Endothelial cell of umbilical vein (primary cell): ENCODE measurements at regions of chr7 and their contacts with region 1.

Region 1: DNA sequence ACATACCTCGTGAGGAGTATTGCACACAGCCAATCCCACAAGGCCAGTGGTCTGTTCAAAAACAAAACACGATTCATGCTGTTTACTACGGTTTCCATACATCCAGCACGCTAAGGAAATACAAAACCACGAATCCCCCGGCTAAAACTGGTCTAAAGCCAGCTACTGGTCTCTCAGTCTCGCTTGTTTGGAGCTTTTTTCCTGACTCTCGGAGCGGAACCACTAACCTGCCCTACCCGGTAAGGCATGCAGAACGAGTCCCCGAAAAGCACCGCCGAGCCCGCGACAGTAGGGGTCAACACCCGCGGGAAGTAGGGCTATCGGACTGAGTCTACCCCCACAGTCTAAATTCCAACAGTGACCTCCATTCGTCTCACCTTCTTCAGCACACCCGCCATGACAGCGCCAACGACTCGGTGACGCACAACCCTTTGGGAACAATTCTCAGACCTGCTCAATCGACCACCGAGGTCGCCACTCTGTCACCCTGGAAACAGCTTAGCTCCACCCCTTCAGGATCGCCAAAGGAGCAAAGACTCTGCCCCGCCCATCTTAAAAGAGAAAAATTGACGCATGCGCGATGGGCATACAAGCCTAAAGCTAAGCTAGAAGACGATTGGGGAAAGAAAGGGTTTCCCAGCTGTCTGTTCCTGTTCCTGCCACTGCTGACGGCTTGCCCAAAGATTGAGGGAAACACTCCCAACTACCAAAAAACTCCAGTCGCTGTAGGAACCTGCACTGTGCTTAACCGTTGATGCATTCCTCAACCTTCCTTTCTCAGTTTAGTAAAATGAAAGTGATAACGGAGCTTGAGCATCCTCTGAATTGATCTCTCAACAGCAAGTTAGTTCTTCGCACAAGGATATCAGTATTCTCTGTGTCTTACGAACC is at the start of gene NDUFA5:
- DNase-seq: peak; percentile 99
- H3K4me3 ChIP-seq: peak within 1 kb of the TSS; percentile 66 to 98 (median 88)
- H3K27ac ChIP-seq: peak within 1 kb of the TSS; percentile 75
- H3K4me1 ChIP-seq: peaks cover 6% of the 10 kb centered on the region
- H3K27me3 ChIP-seq: no peaks in the 10 kb centered on the region
- CTCF ChIP-seq: no peak
- POLR2A ChIP-seq: peak; percentile 76
- total RNA-seq, gene NDUFA5: 57.6 and 62.3 TPM in 2 replicates

Region 2: DNA sequence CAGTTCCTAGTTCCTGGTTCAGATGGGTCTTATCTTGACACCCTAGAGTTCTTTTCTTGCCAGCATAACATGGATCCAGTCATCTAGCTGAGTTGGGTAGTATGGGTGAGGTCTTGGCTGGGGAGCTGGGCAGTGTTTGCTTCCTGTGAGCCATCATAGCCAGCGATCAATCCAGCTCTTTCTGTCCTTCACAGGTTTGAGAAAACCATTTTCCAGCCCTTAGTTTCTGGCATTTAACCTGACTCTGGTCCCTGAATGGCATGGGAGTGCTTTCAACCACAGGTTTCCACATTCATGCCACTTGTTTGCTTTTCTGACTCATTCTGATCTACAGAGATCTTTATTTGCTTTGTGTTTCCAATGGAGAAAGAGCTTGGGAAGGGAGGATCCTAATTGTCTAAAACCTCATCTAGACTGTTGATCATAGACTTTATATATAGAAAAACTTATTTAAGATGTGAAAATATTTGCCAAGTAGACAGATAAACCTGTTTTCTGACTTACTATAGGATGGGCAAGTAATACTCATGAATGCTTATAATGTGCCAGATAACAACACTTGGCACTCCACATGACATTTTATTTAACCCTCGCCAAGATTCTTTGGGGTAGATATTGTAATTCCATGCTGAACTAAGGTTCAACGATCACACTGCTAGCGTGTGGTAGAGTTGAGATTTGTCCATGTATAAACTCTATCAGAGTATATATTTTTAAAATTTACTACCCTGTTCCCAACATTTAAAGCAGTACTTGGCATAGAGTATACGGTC is 366.3 kb before region 1 on chr7:
- CTCF ChIA-PET with region 1: no interaction called
- POLR2A ChIA-PET with region 1: no interaction called
- dilution Hi-C with region 1: no loop called
- intact Hi-C with region 1: no loop called
- DNase-seq: no peak
- H3K4me3 ChIP-seq: no peak overlapping the region
- H3K27ac ChIP-seq: no peak overlapping the region
- H3K4me1 ChIP-seq: no peaks in the 10 kb centered on the region
- H3K27me3 ChIP-seq: no peaks in the 10 kb centered on the region
- CTCF ChIP-seq: no peak
- POLR2A ChIP-seq: no peak

Region 3: DNA sequence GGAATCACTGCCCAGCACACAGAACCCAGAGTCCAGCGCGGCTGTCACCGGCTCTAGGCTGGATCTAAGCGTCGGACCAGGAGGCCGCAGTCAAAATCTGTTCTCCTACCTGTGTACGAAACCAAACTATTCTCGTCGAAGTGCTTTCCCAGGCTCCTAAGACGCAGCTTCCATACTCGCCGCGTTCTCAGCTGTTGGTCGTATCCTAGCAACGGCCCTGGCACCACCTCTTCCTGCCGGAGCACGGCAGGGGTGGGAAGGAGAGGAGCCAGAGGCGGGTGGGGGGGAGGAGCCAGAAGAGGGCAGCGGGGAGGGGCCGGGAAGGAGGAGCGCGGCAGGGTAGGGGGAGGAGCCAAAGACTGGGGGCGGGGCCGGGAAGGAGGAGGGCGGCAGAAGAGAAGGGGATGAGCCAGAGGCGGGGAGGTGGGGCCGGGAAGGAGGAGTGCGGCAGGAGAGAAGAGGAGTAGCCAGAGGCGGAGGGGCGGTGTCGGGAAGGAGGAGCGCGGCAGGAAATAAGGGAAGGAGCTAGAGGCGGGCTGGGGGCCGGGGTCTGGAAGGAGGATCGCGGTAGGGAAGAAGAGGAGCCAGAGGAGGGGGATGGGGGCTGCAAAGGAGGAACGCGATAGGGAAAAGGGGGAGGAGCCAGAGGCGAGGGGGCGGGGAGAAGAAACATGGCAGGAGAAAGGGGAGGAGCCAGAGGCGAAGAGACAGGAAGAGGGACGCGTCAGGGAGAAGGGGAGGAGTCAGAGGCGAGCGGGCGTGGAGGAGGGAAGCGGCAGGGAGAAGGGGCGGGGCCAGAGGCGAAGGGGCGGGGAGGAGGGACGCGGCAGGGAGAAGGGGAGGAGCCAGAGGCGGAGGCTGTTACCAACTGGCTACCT is 23.0 kb before region 1 on chr7 and contains the start of gene IQUB:
- CTCF ChIA-PET with region 1: interaction called, 3 read pairs
- POLR2A ChIA-PET with region 1: interaction called, 16 read pairs
- dilution Hi-C with region 1: no loop called
- intact Hi-C with region 1: loop called (anchors 1 kb)
- DNase-seq: peak; percentile 95
- H3K4me3 ChIP-seq: peak within 1 kb of the TSS; percentile 61 to 81 (median 80)
- H3K27ac ChIP-seq: peak within 1 kb of the TSS; percentile 74
- H3K4me1 ChIP-seq: peaks cover 27% of the 10 kb centered on the region
- H3K27me3 ChIP-seq: peaks cover 6 to 13% of the 10 kb centered on the region in 2 experiments
- CTCF ChIP-seq: no peak
- POLR2A ChIP-seq: no peak
- total RNA-seq, gene IQUB: not detected in 2 replicates

Region 4: DNA sequence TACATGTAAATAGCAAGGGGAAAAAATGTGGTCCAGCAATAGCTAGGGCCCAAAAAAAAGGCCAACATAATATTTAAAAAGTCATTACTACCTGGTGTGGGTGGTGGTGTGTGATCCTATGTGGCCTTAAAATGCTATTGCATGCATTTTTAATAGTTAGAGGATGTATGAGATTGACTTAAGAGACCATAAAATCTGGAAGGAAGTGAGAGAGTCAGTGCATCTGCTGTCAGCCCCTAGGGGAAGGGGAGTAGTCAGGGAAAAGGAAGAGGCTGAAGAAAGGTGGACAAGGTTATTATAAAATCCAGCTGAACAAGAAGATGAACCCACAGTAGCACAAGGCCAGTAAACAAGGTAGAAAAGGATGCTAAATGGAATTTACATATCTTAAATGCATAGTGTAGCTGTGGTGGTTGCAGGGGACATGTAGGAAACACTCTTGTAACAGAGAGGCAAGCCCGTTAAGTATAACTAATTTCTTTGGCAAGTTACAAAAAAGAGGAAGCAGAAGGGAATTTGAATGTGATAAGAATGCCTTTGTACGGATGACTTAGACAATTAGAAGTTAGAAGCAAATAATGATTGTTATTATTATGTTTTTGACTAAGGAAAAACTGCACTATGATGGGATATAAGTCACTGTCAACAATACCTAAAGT is 11.8 kb after region 1 on chr7:
- CTCF ChIA-PET with region 1: interaction called, 8 read pairs
- POLR2A ChIA-PET with region 1: interaction called, 3 read pairs
- dilution Hi-C with region 1: no loop called
- intact Hi-C with region 1: loop called (anchors 1 kb)
- DNase-seq: peak; percentile 45
- H3K4me3 ChIP-seq: no peak overlapping the region
- H3K27ac ChIP-seq: no peak overlapping the region
- H3K4me1 ChIP-seq: peaks cover 18% of the 10 kb centered on the region
- H3K27me3 ChIP-seq: no peaks in the 10 kb centered on the region
- CTCF ChIP-seq: no peak
- POLR2A ChIP-seq: no peak